ENCODE measurements at regions of chr7 and their contacts with region 1.

Region 1: GRCh38 chr7:16431646-16432424 is 10.5 kb upstream of the CRPPA start:
- DNase-seq: peak in 4 of 5 donors; percentile 26 to 40 (median 34)
- H3K4me3 ChIP-seq: no peak overlapping the region
- H3K4me3 Mint-ChIP-seq: no peak overlapping the region
- H3K27ac ChIP-seq: no peak overlapping the region
- H3K27ac Mint-ChIP-seq: no peak overlapping the region
- H3K4me1 ChIP-seq: no peaks in the 10 kb centered on the region
- H3K4me1 Mint-ChIP-seq: peaks cover 0 to 6% (median under 1%) of the 10 kb centered on the region in 4 donors
- H3K27me3 ChIP-seq: no peaks in the 10 kb centered on the region
- H3K27me3 Mint-ChIP-seq: peaks cover 5% of the 10 kb centered on the region in 2 donors

Region 2: GRCh38 chr7:16078076-16078952 is 353.5 kb before region 1 on chr7:
- CTCF ChIA-PET with region 1: no interaction called
- POLR2A ChIA-PET with region 1: no interaction called
- intact Hi-C with region 1: loop called (anchors 5 kb)
- DNase-seq: peak in 4 of 5 donors; percentile 18 to 38 (median 26)
- H3K4me3 ChIP-seq: no peak overlapping the region
- H3K4me3 Mint-ChIP-seq: no peak overlapping the region
- H3K27ac ChIP-seq: no peak overlapping the region
- H3K27ac Mint-ChIP-seq: no peak overlapping the region
- H3K4me1 ChIP-seq: no peaks in the 10 kb centered on the region
- H3K4me1 Mint-ChIP-seq: peaks cover 0 to 7% (median 0%) of the 10 kb centered on the region in 4 donors
- H3K27me3 ChIP-seq: no peaks in the 10 kb centered on the region
- H3K27me3 Mint-ChIP-seq: no peaks in the 10 kb centered on the region

Region 3: GRCh38 chr7:16420649-16421332 is 11.0 kb before region 1 on chr7:
- CTCF ChIA-PET with region 1: interaction called, 60 read pairs
- POLR2A ChIA-PET with region 1: interaction called, 9 read pairs
- intact Hi-C with region 1: no loop called
- DNase-seq: peak; percentile 87 to 89 (median 88)
- H3K4me3 ChIP-seq: peak overlapping the region; percentile 50 to 63
- H3K4me3 Mint-ChIP-seq: peak overlapping the region; percentile 81 to 94 (median 88)
- H3K27ac ChIP-seq: peak overlapping the region; percentile 64
- H3K27ac Mint-ChIP-seq: peak overlapping the region; percentile 82 to 97 (median 95)
- H3K4me1 ChIP-seq: peaks cover 15% of the 10 kb centered on the region
- H3K4me1 Mint-ChIP-seq: peaks cover 10 to 32% (median 21%) of the 10 kb centered on the region in 4 donors
- H3K27me3 ChIP-seq: no peaks in the 10 kb centered on the region
- H3K27me3 Mint-ChIP-seq: peaks cover 0 to 8% of the 10 kb centered on the region in 2 donors

Region 4: GRCh38 chr7:16504016-16504415 is 72.2 kb after region 1 on chr7:
- CTCF ChIA-PET with region 1: no interaction called
- POLR2A ChIA-PET with region 1: no interaction called
- intact Hi-C with region 1: no loop called
- DNase-seq: no peak
- H3K4me3 ChIP-seq: no peak overlapping the region
- H3K4me3 Mint-ChIP-seq: no peak overlapping the region
- H3K27ac ChIP-seq: no peak overlapping the region
- H3K27ac Mint-ChIP-seq: no peak overlapping the region
- H3K4me1 ChIP-seq: no peaks in the 10 kb centered on the region
- H3K4me1 Mint-ChIP-seq: no peaks in the 10 kb centered on the region
- H3K27me3 ChIP-seq: no peaks in the 10 kb centered on the region
- H3K27me3 Mint-ChIP-seq: peaks cover 7% of the 10 kb centered on the region in 2 donors

Measured in CD4-positive, alpha-beta memory T cell (primary cell).